Endothelial cell of umbilical vein (primary cell): ENCODE measurements at regions of chr1 and their contacts with region 1.

Region 1: DNA sequence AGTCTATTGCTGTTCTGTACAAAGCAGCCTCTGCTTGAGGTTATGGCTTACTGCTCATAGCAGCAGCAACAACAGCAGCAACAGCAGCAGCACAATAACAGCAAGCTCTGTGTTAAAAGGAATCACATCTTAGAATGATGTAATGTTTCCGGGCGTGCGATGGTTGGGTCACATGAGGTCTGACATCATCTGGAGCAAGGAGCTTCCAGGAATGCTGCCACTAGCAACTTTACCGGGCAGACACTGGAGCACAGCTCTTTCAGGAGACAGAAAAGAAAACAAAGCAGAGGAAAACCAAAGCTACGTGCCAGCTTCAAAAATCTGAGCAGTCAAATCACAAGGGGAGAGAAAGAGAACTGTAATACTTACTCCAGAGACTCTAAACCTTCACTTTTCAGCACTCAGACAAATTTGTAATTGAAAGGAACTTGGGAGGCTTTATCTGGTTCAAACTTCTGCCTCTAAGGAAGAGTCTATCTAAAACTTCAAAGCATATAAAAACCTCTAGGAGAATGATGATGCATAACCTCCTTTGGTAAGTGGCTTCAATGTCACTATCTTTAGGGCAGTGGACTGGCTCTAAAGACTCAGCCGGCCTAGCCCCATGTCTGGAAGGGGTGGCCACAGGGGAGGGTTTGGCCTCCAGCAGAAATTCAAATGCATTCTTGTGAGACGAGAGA is 28.3 kb upstream of the RAB3GAP2 start:
- DNase-seq: peak; percentile 95
- H3K4me3 ChIP-seq: no peak overlapping the region
- H3K27ac ChIP-seq: peak overlapping the region; percentile 82
- H3K4me1 ChIP-seq: peaks cover 12% of the 10 kb centered on the region
- H3K27me3 ChIP-seq: peaks cover 3 to 5% of the 10 kb centered on the region in 2 experiments
- CTCF ChIP-seq: no peak
- POLR2A ChIP-seq: no peak

Region 2: DNA sequence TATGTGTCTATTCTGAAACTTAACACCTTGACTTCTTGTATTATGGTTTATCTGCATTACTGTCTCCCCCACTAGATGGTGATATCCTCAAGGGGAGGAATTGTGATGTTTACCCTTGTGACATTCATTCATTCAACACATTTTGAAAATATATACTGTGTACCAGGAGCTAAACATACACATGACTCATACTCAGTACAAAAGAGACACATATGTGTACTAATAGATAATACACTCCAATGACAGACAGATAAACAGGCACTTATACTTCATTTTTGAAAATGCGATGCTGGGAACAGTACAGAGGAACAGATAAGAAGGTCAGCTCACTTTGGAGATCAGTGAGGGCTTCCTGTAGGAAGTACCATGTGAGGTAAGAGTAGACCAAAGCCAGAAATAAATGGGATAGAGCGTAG is 19.4 kb before region 1 on chr1:
- CTCF ChIA-PET with region 1: interaction called, 60 read pairs
- POLR2A ChIA-PET with region 1: no interaction called
- dilution Hi-C with region 1: no loop called
- intact Hi-C with region 1: no loop called
- DNase-seq: peak; percentile 53
- H3K4me3 ChIP-seq: no peak overlapping the region
- H3K27ac ChIP-seq: no peak overlapping the region
- H3K4me1 ChIP-seq: no peaks in the 10 kb centered on the region
- H3K27me3 ChIP-seq: peaks cover 20 to 24% of the 10 kb centered on the region in 2 experiments
- CTCF ChIP-seq: peak; percentile 17 to 18
- POLR2A ChIP-seq: no peak

Region 3: DNA sequence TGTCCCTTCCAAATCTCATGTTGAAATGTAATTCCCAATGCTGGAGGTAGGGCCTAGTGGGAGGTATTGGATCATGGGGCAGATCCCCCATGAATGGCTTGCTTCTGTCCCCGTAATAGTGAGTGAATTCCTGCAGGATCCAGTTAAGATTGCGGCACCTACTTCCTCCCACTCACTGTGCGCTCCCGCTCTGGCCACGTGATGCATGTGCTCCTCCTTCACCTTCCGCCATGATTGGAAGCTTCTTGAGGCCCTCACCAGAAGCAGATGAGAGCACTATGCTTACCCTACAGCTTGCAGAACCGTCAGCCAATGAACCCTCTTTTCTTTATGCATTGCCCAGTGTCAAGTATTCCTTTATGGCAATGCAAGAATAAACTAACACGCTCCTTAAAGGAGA is 13.5 kb before region 1 on chr1:
- CTCF ChIA-PET with region 1: interaction called, 60 read pairs
- POLR2A ChIA-PET with region 1: no interaction called
- dilution Hi-C with region 1: no loop called
- intact Hi-C with region 1: no loop called
- DNase-seq: no peak
- H3K4me3 ChIP-seq: no peak overlapping the region
- H3K27ac ChIP-seq: no peak overlapping the region
- H3K4me1 ChIP-seq: no peaks in the 10 kb centered on the region
- H3K27me3 ChIP-seq: peaks cover 6 to 10% of the 10 kb centered on the region in 2 experiments
- CTCF ChIP-seq: no peak
- POLR2A ChIP-seq: no peak

Region 4: DNA sequence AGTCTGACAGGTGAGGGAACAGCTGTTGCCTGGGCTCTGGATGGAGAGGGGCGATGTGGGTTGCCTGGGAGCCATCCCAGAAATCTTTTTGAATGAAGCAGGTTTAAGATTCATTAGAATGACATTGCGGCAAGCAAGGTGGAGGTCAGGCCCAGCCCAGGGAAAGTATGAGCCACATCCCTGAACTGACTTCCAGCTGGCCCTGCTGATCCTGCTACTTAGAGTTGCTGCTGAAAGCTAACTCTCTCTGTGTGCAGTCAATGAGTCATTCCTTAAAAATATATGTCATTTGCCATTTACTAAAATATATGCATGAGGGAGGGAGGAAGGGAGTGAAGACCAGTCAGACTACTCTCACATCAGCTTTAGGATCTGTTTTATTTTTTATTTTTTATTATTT is 26.0 kb after region 1 on chr1:
- CTCF ChIA-PET with region 1: interaction called, 12 read pairs
- POLR2A ChIA-PET with region 1: interaction called, 12 read pairs
- dilution Hi-C with region 1: no loop called
- intact Hi-C with region 1: no loop called
- DNase-seq: no peak
- H3K4me3 ChIP-seq: no peak overlapping the region
- H3K27ac ChIP-seq: no peak overlapping the region
- H3K4me1 ChIP-seq: no peaks in the 10 kb centered on the region
- H3K27me3 ChIP-seq: no peaks in the 10 kb centered on the region
- CTCF ChIP-seq: no peak
- POLR2A ChIP-seq: no peak

Region 5: GRCh38 chr1:220527908-220528678 is 227.5 kb after region 1 on chr1 and contains the start of gene MARK1:
- CTCF ChIA-PET with region 1: interaction called, 13 read pairs
- POLR2A ChIA-PET with region 1: no interaction called
- dilution Hi-C with region 1: no loop called
- intact Hi-C with region 1: loop called (anchors 5 kb)
- DNase-seq: peak; percentile 37
- H3K4me3 ChIP-seq: peak within 1 kb of the TSS; percentile 64 to 94 (median 78)
- H3K27ac ChIP-seq: peak within 1 kb of the TSS; percentile 2
- H3K4me1 ChIP-seq: peaks cover 7% of the 10 kb centered on the region
- H3K27me3 ChIP-seq: peaks cover 10 to 23% of the 10 kb centered on the region in 2 experiments
- CTCF ChIP-seq: no peak
- POLR2A ChIP-seq: peak; percentile 28
- total RNA-seq, gene MARK1: 5.5 and 6.0 TPM in 2 replicates